ENCODE measurements at regions of chr20 and their contacts with region 1.

Region 1: GRCh38 chr20:22339091-22339881 is 245.1 kb downstream of the FOXA2 start:
- DNase-seq: peak; percentile 60 to 91
- ATAC-seq: peak; percentile 71 to 86; a peak in 5 of 6 replicates
- H3K4me3 ChIP-seq: no peak overlapping the region
- H3K27ac ChIP-seq: peak overlapping the region; percentile 63 to 65; a peak in 4 of 6 replicates
- H3K4me1 ChIP-seq: peaks cover 25% of the 10 kb centered on the region
- CTCF ChIP-seq: peak; percentile 98
- EP300 ChIP-seq: no peak
- POLR2A ChIP-seq: no peak
- RAD21 ChIP-seq: peak; percentile 100

Region 2: DNA sequence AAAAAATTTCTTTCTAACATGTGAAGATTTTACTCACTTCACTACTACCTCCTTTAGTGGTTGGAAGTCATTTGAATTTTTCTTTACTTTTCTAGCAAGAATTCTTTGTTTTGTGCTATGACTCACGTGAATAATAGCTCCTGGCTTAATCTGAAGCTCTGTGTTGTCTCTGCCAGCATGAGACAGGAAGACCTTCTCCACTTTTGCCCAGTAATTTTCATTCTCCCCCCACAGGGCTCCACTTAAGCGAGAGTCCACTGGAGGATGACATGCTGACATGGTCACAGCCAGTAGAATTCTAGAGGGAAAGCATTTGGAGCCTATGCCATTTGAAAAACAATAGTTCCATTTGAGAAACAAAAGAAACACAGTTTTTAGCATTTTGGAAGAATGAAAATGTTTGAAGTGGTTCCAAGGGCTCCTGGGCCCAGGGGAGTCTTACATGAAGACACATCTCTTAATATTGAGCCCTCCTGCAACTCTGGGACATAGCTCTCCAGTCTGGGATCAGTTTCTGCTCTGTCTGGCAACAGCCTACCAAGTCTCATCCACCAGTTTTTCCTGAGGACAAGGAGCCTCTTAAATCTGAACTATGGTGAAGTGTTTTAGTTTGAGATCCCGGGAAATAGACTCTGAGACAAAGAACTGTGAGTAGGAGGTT is 402.4 kb before region 1 on chr20:
- CTCF ChIA-PET with region 1: no interaction called
- POLR2A ChIA-PET with region 1: no interaction called
- DNase-seq: no peak
- ATAC-seq: no peak
- H3K4me3 ChIP-seq: no peak overlapping the region
- H3K27ac ChIP-seq: no peak overlapping the region
- H3K4me1 ChIP-seq: no peaks in the 10 kb centered on the region
- CTCF ChIP-seq: no peak
- EP300 ChIP-seq: no peak
- POLR2A ChIP-seq: no peak
- RAD21 ChIP-seq: no peak

Region 3: GRCh38 chr20:22371843-22372242 is 32.6 kb after region 1 on chr20:
- CTCF ChIA-PET with region 1: interaction called, 63 read pairs
- POLR2A ChIA-PET with region 1: no interaction called
- DNase-seq: no peak
- ATAC-seq: no peak
- H3K4me3 ChIP-seq: no peak overlapping the region
- H3K27ac ChIP-seq: no peak overlapping the region
- H3K4me1 ChIP-seq: peaks cover 38% of the 10 kb centered on the region
- CTCF ChIP-seq: no peak
- EP300 ChIP-seq: no peak
- POLR2A ChIP-seq: no peak
- RAD21 ChIP-seq: no peak

Region 4: GRCh38 chr20:22394583-22394982 is 55.3 kb after region 1 on chr20:
- CTCF ChIA-PET with region 1: interaction called, 16 read pairs
- POLR2A ChIA-PET with region 1: no interaction called
- DNase-seq: no peak
- ATAC-seq: no peak
- H3K4me3 ChIP-seq: no peak overlapping the region
- H3K27ac ChIP-seq: peak overlapping the region; percentile 28 to 70
- H3K4me1 ChIP-seq: peaks cover 49% of the 10 kb centered on the region
- CTCF ChIP-seq: no peak
- EP300 ChIP-seq: no peak
- POLR2A ChIP-seq: no peak
- RAD21 ChIP-seq: no peak

Region 5: GRCh38 chr20:22453239-22454080 is 114.2 kb after region 1 on chr20:
- CTCF ChIA-PET with region 1: interaction called, 36 read pairs
- POLR2A ChIA-PET with region 1: no interaction called
- DNase-seq: peak; percentile 70 to 77
- ATAC-seq: peak in 1 of 2 experiments; percentile 75; a peak in 3 of 6 replicates
- H3K4me3 ChIP-seq: no peak overlapping the region
- H3K27ac ChIP-seq: peak overlapping the region in 1 of 2 experiments; percentile 43; a peak in 3 of 6 replicates
- H3K4me1 ChIP-seq: peaks cover 8% of the 10 kb centered on the region; the same call in 2 of the 3 replicates
- CTCF ChIP-seq: peak; percentile 82
- EP300 ChIP-seq: no peak
- POLR2A ChIP-seq: no peak
- RAD21 ChIP-seq: peak; percentile 76 to 78

Region 6: DNA sequence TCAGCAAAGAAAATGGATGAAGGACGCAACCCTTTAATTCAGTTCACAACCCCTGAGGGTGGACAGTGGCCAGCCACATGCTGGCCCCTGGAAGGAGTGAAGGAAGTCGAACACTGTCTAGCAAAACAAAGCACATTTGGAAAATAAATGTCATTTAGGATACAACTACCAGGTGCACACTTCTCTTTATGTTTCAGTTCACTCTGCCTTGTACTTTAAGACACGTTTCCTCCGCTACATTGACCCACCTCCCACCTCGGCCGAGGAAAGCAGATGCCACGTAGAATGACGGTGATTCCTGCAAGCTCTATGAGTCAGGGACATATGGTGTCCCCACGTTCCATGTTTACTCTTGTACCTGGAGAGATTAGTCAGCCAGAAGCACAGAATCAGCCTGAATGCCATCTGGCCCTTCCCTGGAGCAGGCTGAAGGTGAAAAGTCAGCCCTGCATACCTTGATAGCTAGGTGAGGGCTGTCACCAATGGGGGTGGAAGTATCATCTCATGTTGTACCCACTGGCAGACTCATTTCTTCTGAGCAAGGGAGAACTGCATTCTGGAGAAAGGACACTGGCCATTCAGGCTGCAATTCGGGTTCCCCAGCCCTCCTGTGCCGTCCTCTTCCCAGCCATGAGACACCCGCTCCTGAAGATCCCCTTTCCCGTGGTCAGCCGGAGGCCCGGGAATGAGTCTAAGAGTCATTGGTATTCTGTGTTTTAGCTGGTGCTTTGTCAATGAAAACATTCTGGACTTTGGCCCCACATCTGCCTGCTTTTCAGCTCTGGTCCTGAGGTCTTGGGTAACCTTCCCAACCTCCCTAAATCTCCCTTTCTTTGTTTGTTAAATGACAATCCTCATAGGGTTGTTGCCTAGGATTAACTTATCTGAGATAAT is 184.5 kb after region 1 on chr20:
- CTCF ChIA-PET with region 1: interaction called, 10 read pairs
- POLR2A ChIA-PET with region 1: no interaction called
- DNase-seq: peak in 1 of 2 experiments; percentile 28
- ATAC-seq: peak; percentile 54 to 55; a peak in 4 of 6 replicates
- H3K4me3 ChIP-seq: no peak overlapping the region
- H3K27ac ChIP-seq: peak overlapping the region; percentile 14 to 65; a peak in 3 of 6 replicates
- H3K4me1 ChIP-seq: peaks cover 14% of the 10 kb centered on the region
- CTCF ChIP-seq: no peak
- EP300 ChIP-seq: no peak
- POLR2A ChIP-seq: no peak
- RAD21 ChIP-seq: no peak

Region 7: DNA sequence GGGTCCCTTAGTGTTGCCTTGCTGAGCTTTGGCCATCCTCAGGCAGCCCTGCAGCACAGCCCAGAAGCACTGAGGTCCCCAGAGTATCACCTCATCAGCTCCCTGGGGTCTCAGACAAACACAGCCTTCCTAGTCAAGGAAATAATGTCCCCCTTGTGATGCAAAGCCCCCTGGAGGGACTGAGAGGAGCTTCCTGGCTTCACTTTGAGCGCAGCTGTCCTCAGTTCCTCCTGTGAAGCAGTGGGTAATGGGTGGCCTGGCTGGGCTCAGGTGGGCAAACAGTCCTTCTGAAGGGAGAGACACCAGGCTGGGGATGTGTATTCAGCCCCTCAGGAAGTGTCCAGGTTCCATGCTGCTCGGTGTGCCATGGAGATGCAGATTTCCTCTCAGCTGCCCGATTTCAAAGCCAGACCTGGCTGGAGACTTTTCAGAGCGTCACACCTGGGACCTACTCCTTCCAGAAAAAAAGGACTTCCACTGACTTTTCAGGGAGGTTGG is 324.3 kb after region 1 on chr20:
- CTCF ChIA-PET with region 1: interaction called, 10 read pairs
- POLR2A ChIA-PET with region 1: no interaction called
- DNase-seq: no peak
- ATAC-seq: peak in 1 of 2 experiments; percentile 43; a peak in 3 of 6 replicates
- H3K4me3 ChIP-seq: no peak overlapping the region
- H3K27ac ChIP-seq: no peak overlapping the region
- H3K4me1 ChIP-seq: no peaks in the 10 kb centered on the region
- CTCF ChIP-seq: no peak
- EP300 ChIP-seq: no peak
- POLR2A ChIP-seq: no peak
- RAD21 ChIP-seq: no peak

Region 8: GRCh38 chr20:23340524-23340923 is 1001.2 kb after region 1 on chr20:
- CTCF ChIA-PET with region 1: interaction called, 27 read pairs
- POLR2A ChIA-PET with region 1: interaction called, 3 read pairs
- DNase-seq: peak; percentile 83 to 87
- ATAC-seq: peak; percentile 85 to 95
- H3K4me3 ChIP-seq: no peak overlapping the region
- H3K27ac ChIP-seq: peak overlapping the region; percentile 6 to 60; a peak in 5 of 6 replicates
- H3K4me1 ChIP-seq: no peaks in the 10 kb centered on the region
- CTCF ChIP-seq: peak; percentile 90
- EP300 ChIP-seq: no peak
- POLR2A ChIP-seq: no peak
- RAD21 ChIP-seq: peak; percentile 92 to 96

Measured in A549 (cell line).